ENCODE measurements at regions of chr15 and their contacts with region 1.

Region 1: DNA sequence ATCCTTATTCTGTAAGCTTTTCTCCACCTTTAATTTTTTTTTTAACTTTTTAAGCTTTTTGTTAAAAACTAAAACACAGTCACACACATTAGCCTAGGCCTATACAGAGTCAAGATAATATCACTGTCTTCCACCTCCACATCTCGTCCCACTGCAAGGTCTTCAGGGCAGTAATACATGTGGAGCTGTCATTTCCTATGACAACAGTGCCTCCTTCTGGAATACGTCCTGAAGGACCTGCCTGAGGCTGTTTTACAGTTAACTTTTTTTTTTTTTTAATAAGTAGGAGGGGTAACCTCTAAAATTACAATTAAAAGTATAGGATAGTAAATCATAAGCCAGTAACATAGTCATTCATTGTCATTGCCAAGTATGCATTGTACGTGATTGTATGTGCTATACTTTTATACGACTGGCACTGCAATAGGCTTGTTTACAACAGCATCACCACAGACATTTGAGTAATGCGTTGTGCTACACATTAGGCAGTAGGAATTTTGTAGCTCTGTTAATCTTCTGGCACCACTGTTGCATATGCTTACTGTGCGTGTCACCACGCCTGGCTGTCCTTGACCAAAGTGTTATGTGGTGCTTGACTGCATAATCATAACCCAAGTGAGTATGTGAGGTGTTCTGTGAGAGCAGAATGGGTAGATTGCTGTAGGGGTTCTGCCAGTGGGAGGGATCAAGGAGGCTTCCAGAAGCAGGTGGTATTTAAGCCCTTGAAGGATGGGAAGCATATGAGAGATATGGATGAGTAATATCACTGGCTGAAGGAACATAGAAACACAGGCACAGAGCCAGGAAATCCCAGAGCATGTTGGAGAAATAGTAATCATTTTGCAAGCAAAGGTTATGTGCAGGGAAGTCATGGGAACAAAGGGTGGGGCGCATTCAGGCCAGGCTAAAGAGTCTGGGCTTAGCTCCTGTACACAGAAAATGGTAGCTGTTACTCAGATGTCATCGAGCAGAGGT is 18.3 kb downstream of the FBXO22 start:
- DNase-seq: peak; percentile 30

Region 2: DNA sequence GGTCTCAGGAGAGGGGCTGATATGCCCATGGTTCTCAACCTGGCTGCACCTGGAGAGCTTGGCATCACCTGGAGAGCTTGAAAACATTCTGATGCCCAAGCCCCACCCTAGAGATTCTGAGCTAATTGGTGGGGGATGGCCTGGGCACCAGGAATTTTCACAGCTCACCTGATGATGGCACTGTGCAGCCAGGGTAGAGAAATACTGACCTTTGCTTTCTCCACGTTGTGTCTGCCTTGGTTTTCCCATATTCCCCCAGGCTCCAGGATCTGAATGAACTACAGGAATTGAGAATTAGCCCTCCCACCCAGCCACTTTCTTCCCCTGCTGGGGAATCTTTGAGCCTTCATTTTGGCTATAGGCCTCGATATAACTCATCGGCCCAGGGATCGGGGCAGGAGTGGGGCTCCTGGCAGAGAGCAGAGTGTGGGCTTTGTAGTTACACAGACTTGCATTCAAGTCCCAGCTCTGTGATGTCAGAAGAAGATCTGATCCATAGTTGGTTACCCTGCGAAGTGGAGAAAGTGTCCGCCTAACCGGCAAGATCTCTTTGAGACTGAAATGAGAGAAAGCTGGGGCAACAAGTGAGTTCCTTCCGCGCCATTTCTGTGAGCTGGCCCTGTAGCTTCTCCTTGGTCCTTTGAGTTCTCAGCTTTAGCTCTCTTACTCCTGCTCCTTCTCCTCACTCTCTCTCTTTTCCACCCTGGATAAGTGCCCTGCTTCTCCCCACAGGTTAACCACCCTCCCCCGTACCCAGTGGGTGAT is 111.8 kb before region 1 on chr15:
- CTCF ChIA-PET with region 1: interaction called, 14 read pairs
- POLR2A ChIA-PET with region 1: no interaction called
- DNase-seq: peak; percentile 40